Heart right ventricle (tissue), 16 donors: ENCODE measurements at regions of chr15 and their contacts with region 1.

Region 1: GRCh38 chr15:59543721-59544547 is 67.6 kb upstream of the GCNT3 start:
- DNase-seq: no peak
- ATAC-seq: no peak
- H3K4me3 ChIP-seq: no peak overlapping the region
- H3K27ac ChIP-seq: no peak overlapping the region
- H3K4me1 ChIP-seq: peaks cover 0 to 3% (median 0%) of the 10 kb centered on the region in 9 donors
- H3K27me3 ChIP-seq: peaks cover 0 to 7% (median 0%) of the 10 kb centered on the region in 7 donors
- CTCF ChIP-seq: no peak

Region 2: GRCh38 chr15:59598461-59598860 is 54.5 kb after region 1 on chr15:
- intact Hi-C with region 1: no loop called
- DNase-seq: no peak
- ATAC-seq: no peak
- H3K4me3 ChIP-seq: no peak overlapping the region
- H3K27ac ChIP-seq: no peak overlapping the region
- H3K4me1 ChIP-seq: peaks cover 0 to 9% (median 0%) of the 10 kb centered on the region in 9 donors
- H3K27me3 ChIP-seq: no peaks in the 10 kb centered on the region
- CTCF ChIP-seq: no peak

Region 3: GRCh38 chr15:59632714-59633113 is 88.8 kb after region 1 on chr15:
- intact Hi-C with region 1: loop called in 5 of 10 experiments (anchors 10 kb)
- DNase-seq: no peak
- ATAC-seq: no peak
- H3K4me3 ChIP-seq: no peak overlapping the region
- H3K27ac ChIP-seq: no peak overlapping the region
- H3K4me1 ChIP-seq: no peaks in the 10 kb centered on the region
- H3K27me3 ChIP-seq: no peaks in the 10 kb centered on the region
- CTCF ChIP-seq: peak in 2 of 9 donors; percentile 18 to 26

Region 4: DNA sequence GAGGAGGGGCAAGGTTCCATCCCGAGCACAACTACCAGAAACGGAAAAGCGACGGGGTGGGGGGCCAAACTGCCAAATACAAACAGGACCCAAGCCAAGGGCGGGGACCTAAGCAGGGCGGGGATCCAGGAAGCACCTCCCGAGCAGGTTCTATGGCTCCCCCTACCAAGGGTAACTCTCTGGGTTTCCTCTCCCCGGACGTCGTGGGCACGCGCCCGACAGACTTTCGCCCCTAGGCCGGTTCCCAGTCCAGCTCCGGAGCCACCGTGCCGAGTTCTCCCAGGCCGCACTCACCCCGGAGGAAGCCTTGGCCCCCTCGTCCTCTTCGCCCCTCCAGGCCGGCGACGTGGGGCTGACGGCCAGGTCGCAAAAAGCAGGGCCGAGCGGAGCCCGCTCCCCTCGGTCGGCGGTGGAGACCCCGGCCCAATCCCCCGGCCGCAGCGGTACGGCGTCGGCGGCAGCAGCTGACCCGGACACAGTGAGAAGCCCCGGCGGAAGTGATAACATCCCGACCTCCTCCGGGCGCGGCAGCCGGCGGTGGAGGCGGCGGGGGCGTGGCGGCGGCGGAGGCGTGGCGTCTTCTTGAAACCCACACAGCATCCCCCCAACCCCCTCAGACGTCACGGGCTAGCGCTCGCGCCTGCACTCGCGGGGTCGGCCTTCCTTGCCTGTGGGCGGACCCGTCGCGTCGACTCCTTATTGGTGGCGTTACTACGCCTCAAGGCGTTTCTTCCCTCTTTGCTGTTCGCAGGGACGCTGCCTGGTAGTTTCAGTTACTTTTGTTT is 145.1 kb after region 1 on chr15 and contains the start of gene BNIP2:
- intact Hi-C with region 1: no loop called
- DNase-seq: peak; percentile 99 to 100
- ATAC-seq: peak; percentile 97 to 98 (median 98)
- H3K4me3 ChIP-seq: peak within 1 kb of the TSS; percentile 72 to 99 (median 90)
- H3K27ac ChIP-seq: peak within 1 kb of the TSS; percentile 95 to 99 (median 98)
- H3K4me1 ChIP-seq: peaks cover 0 to 56% (median 38%) of the 10 kb centered on the region in 9 donors
- H3K27me3 ChIP-seq: no peaks in the 10 kb centered on the region
- CTCF ChIP-seq: peak in 3 of 9 donors; percentile 10 to 18 (median 15)
- total RNA-seq, gene BNIP2: 65.2 to 96.6 (median 80.2) TPM